K562 (cell line): ENCODE measurements at regions of chr11 and their contacts with region 1.

Region 1: DNA sequence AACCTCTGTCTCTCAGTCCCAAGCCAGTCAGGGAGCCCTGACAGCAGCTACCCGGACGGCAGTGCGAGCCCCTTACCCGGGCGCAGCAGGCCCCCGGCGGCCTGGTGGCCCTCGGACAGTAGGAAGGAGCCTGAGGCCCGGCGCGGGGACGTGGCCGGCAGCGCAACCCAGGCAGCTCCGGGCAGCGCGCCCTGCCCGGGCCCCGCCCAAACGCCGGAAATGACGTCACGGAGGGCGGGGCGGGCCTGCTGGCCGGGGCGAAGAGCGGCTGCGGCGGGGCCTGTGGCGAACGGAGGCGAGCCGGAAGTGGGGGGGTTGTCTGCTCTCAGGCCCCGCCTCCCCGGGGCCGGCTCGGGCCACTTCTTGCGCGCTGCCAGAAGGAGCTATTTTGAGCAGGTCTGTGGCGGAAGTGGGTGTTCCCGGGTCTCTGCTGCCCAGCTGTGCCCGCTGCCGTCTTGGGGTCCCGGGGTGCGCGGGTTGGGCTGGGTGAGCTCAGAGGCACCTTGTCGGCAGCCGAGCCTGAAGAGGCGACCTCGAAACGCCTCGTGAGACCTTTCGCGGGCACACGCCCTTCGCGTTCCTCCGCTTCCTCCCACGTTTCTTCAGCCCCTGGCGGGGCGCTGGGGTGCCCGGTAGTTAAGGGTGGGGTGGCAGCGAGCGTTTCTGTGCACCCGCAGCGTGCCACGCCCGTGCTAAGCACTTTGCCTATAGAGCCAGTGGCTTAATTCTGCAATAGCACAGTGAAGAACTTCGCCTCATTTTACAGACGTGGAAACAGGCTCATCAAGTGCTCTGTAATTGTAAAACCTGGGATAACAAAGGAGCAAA is at the start of gene C11orf24:
- DNase-seq: peak; percentile 95 to 99 (median 98)
- ATAC-seq: peak; percentile 88
- H3K4me3 ChIP-seq: peak within 1 kb of the TSS; percentile 90
- H3K27ac ChIP-seq: peak within 1 kb of the TSS; percentile 97
- H3K4me1 ChIP-seq: peaks cover 22 to 39% of the 10 kb centered on the region in 2 experiments
- H3K27me3 ChIP-seq: no peaks in the 10 kb centered on the region
- CTCF ChIP-seq: no peak
- EP300 ChIP-seq: peak; percentile 25; the same call in 1 of the 2 replicates
- POLR2A ChIP-seq: peak; percentile 95
- RAD21 ChIP-seq: no peak
- polyA plus RNA-seq, gene C11orf24: 2.0 to 4.4 TPM

Region 2: DNA sequence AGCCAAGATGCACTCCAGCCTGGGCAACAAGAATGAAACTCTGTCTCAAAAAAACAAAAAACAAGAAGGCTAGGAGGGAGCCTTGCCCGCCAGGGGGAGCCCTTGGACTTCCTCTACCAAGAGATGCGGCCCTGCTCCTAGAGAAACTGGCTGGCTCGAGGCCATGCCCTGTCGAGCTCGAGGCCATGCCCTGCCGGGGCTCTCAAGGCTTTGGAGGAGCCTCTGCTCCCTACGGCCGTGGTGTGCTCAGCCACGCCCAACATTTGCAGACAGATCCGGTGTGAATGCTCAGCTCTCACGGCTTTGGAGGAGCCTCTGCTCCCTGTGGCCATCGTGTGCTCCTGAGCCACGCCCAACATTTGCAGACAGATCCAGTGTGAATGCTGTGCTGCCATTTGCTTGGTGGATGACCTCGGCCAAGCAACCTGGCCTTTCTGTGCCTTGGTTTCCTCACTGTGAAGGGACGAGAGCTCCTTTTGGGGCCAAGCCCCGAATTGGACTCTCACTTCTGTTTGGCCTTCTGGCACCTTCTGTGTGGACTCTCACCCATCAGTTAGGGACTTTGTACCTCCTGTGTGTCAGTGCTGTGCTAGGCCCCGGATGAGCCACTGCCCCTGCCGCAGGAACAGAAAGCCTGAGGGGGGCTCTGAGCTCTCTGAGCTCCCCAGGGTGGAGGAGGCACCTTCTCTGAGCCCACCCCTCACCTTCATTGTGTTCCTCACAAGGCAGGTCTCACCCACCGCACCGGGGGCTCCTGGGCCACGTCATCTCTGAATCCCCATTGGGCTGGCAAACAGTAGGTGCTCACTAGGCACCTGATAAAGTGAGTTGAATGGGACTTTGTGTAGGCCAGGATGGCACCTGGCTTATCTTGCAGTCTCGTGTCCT is 14.3 kb before region 1 on chr11:
- CTCF ChIA-PET with region 1: no interaction called
- POLR2A ChIA-PET with region 1: interaction called, 23 read pairs
- in situ Hi-C with region 1: no loop called
- intact Hi-C with region 1: no loop called
- DNase-seq: peak; percentile 83 to 90 (median 84)
- ATAC-seq: peak; percentile 84
- H3K4me3 ChIP-seq: no peak overlapping the region
- H3K27ac ChIP-seq: no peak overlapping the region
- H3K4me1 ChIP-seq: peaks cover 9 to 15% of the 10 kb centered on the region in 2 experiments; a peak in 4 of 5 replicates
- H3K27me3 ChIP-seq: no peaks in the 10 kb centered on the region
- CTCF ChIP-seq: peak; percentile 85 to 90 (median 88)
- EP300 ChIP-seq: no peak
- POLR2A ChIP-seq: no peak
- RAD21 ChIP-seq: peak; percentile 97 to 98

Region 3: GRCh38 chr11:68287419-68287818 is 15.4 kb after region 1 on chr11:
- CTCF ChIA-PET with region 1: no interaction called
- POLR2A ChIA-PET with region 1: interaction called, 13 read pairs
- in situ Hi-C with region 1: no loop called
- intact Hi-C with region 1: no loop called
- DNase-seq: peak in 1 of 4 experiments; percentile 7
- ATAC-seq: no peak; the same call in 2 of the 3 replicates
- H3K4me3 ChIP-seq: no peak overlapping the region
- H3K27ac ChIP-seq: no peak overlapping the region
- H3K4me1 ChIP-seq: peaks cover 5 to 6% of the 10 kb centered on the region in 2 experiments; a peak in 3 of 5 replicates
- H3K27me3 ChIP-seq: no peaks in the 10 kb centered on the region
- CTCF ChIP-seq: no peak
- EP300 ChIP-seq: no peak
- POLR2A ChIP-seq: no peak
- RAD21 ChIP-seq: no peak

Region 4: DNA sequence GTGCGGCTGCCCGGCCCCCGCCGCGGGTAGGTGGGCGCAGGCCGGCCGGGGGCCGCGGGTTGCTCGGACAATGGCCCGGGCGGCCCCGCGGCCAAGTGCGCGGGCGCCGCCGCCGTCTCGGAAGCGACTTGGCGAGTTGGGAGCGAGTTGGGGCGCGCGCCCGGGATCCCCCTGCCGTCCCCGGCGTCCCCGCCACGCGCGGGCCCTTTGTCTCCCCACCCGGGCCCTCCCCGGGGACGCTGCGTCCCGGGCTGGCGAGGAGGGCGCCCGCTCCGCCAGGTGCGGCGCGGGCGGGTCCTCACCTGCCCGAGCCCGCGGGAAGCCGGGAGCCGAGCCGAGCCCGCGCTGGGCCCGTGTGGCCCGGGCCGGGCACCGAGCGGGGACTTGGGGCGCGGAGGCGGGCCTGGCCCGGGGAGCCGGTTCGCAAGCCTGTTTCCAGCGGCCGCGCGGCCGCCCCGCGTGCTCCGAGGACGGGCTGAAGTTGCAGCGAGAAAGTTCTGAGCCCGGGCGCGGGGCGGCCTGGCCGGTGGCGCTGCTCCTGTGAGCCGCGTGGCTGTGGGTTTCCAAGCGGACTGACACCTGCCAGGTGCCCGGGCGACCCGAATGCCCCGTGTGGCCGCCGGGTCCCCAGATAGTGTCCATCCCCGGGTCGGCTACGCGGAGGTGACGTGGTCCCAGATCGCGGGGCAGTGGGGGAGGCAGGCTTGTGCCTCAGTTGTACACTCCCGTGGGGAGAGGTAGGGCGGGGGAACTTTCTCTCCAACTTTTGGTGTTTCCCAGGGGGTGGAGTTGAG is 41.0 kb after region 1 on chr11:
- CTCF ChIA-PET with region 1: no interaction called
- POLR2A ChIA-PET with region 1: interaction called, 12 read pairs
- in situ Hi-C with region 1: no loop called
- intact Hi-C with region 1: no loop called
- DNase-seq: peak; percentile 39 to 84 (median 66)
- ATAC-seq: peak; percentile 7
- H3K4me3 ChIP-seq: peak overlapping the region; percentile 82
- H3K27ac ChIP-seq: peak overlapping the region; percentile 90
- H3K4me1 ChIP-seq: peaks cover 12 to 51% of the 10 kb centered on the region in 2 experiments
- H3K27me3 ChIP-seq: no peaks in the 10 kb centered on the region
- CTCF ChIP-seq: 0 out of 6 replicates have a peak, but pooled peaks of 1 of the 3 experiments have one; percentile 0
- EP300 ChIP-seq: no peak
- POLR2A ChIP-seq: no peak
- RAD21 ChIP-seq: no peak